ENCODE measurements at regions of chr2 and their contacts with region 1.

Region 1: DNA sequence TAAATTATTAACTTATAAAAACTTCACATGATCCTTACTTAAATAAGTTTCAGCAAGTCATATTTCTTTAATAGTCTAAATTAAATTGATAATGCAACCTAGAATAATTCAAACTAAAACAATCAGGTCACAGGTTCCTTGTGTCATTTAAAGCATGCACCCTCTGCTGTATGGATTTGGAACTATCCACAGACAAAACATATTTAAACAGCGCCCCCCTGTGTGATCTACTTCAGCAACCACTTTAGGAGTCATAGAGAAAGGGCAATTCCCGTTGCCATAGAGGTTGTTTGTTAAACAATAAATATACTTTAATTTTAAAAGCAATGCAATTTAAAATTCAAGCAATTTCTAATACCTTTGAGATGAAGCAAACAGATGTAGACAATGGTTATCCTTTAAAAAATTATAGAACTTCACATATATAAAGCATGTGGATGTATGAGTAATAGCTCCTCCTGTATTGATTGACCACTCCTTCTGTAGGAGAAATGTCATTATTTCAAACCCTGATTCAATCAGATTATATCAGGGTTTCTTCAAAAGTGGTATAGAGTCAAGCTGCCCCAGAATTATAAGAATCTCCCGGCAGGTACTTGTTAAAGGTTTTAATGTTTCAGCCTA is 21.2 kb downstream of the GRB14 start:
- DNase-seq: peak; percentile 71
- H3K4me3 Mint-ChIP-seq: no peak overlapping the region
- H3K27ac Mint-ChIP-seq: peak overlapping the region; percentile 46
- H3K4me1 Mint-ChIP-seq: peaks cover 10% of the 10 kb centered on the region
- H3K27me3 Mint-ChIP-seq: no peaks in the 10 kb centered on the region
- CTCF ChIP-seq: peak; percentile 93

Region 2: DNA sequence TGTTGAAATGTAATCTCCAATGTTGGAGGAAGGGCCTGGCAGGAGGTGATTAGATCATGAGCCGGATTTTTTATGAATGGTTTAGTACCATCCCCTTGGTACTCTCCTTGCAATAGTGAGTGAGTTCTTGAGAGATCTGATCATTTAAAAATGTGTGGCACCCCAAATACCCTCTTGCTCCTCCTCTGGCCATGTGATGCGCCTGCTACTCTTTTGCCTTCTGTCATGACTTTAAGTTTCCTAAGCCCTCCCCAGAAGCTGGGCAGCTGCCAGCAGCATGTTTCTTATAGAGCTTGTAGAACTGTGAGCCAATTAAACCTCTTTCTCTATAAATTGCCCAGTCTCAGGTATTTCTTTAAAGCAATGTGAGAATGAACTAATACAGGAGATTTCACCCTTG is 791.7 kb before region 1 on chr2:
- CTCF ChIA-PET with region 1: no interaction called
- intact Hi-C with region 1: no loop called
- DNase-seq: no peak
- H3K4me3 Mint-ChIP-seq: no peak overlapping the region
- H3K27ac Mint-ChIP-seq: no peak overlapping the region
- H3K4me1 Mint-ChIP-seq: peaks cover 8% of the 10 kb centered on the region
- H3K27me3 Mint-ChIP-seq: no peaks in the 10 kb centered on the region
- CTCF ChIP-seq: no peak

Region 3: DNA sequence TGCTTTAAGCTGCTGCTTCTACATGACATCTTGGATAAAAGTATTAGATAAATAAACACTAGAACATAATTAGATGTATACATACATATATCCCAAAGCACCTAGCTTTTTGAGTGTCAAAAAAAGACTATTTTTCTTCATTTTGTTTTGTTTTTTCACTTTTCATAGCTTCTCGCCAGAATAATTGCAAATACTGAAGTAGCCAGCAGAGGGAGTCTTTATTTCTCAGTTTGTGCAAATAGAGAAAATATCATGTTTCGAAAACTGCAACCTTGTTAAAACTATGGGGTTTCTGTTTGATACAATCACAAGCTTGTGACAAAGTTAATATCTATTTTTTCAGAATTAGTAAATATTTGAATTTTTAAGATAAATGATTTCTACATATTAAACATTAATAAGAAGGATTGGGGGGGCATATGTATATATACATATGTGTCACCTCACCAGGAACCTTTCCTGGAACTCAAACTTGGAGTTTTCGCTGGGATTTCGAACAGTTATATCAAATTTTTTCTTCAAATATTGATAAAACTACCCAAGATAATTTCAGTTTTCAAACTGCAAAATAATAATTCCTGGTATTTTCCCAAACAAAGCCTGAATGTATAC is 39.8 kb before region 1 on chr2:
- CTCF ChIA-PET with region 1: interaction called, 30 read pairs
- intact Hi-C with region 1: loop called (anchors 1 kb)
- DNase-seq: peak; percentile 23
- H3K4me3 Mint-ChIP-seq: no peak overlapping the region
- H3K27ac Mint-ChIP-seq: no peak overlapping the region
- H3K4me1 Mint-ChIP-seq: peaks cover 9% of the 10 kb centered on the region
- H3K27me3 Mint-ChIP-seq: no peaks in the 10 kb centered on the region
- CTCF ChIP-seq: peak; percentile 61

Region 4: DNA sequence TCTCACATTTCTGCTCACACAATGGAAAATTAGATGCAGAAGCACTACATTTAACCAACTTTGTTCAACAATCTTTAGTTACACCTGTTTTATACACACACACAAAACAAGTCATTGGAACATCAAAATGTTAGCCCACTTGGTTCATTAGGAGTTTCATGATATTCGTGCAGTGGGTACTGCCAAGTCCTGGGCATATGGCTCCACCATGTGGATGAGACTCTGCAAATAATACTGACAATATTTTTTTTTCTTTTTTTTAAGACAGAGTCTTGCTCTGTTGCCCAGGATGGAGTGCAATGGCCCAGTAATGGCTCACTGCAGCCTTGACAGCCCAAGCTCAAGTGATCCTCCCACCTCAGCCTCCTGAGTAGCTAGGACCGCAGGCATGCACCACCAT is 55.7 kb after region 1 on chr2:
- CTCF ChIA-PET with region 1: no interaction called
- intact Hi-C with region 1: no loop called
- DNase-seq: peak; percentile 5
- H3K4me3 Mint-ChIP-seq: no peak overlapping the region
- H3K27ac Mint-ChIP-seq: no peak overlapping the region
- H3K4me1 Mint-ChIP-seq: no peaks in the 10 kb centered on the region
- H3K27me3 Mint-ChIP-seq: no peaks in the 10 kb centered on the region
- CTCF ChIP-seq: no peak

Measured in Calu3 (cell line).